PC-9 (cell line): ENCODE measurements at regions of chr13 and their contacts with region 1.

Region 1: GRCh38 chr13:27362064-27362883 is 62.1 kb upstream of the GTF3A start:
- DNase-seq: peak; percentile 59 to 78
- H3K4me3 ChIP-seq: peak overlapping the region; percentile 33; the same call in 1 of the 2 replicates
- H3K27ac ChIP-seq: no peak overlapping the region
- H3K4me1 ChIP-seq: no peaks in the 10 kb centered on the region; the same call in 1 of the 2 replicates
- H3K27me3 ChIP-seq: peaks cover 4% of the 10 kb centered on the region; the same call in 1 of the 2 replicates
- CTCF ChIP-seq: peak; percentile 90

Region 2: GRCh38 chr13:26985285-26985878 is 376.9 kb before region 1 on chr13:
- CTCF ChIA-PET with region 1: interaction called, 10 read pairs
- POLR2A ChIA-PET with region 1: no interaction called
- intact Hi-C with region 1: loop called (anchors 1 kb)
- DNase-seq: peak; percentile 51 to 74
- H3K4me3 ChIP-seq: no peak overlapping the region
- H3K27ac ChIP-seq: no peak overlapping the region
- H3K4me1 ChIP-seq: peaks cover 32% of the 10 kb centered on the region
- H3K27me3 ChIP-seq: no peaks in the 10 kb centered on the region
- CTCF ChIP-seq: peak; percentile 89

Region 3: GRCh38 chr13:27283906-27284493 is 78.3 kb before region 1 on chr13:
- CTCF ChIA-PET with region 1: no interaction called
- POLR2A ChIA-PET with region 1: no interaction called
- intact Hi-C with region 1: loop called (anchors 1 kb)
- DNase-seq: peak; percentile 46 to 49
- H3K4me3 ChIP-seq: no peak overlapping the region
- H3K27ac ChIP-seq: no peak overlapping the region
- H3K4me1 ChIP-seq: peaks cover 20% of the 10 kb centered on the region
- H3K27me3 ChIP-seq: no peaks in the 10 kb centered on the region
- CTCF ChIP-seq: peak; percentile 65

Region 4: DNA sequence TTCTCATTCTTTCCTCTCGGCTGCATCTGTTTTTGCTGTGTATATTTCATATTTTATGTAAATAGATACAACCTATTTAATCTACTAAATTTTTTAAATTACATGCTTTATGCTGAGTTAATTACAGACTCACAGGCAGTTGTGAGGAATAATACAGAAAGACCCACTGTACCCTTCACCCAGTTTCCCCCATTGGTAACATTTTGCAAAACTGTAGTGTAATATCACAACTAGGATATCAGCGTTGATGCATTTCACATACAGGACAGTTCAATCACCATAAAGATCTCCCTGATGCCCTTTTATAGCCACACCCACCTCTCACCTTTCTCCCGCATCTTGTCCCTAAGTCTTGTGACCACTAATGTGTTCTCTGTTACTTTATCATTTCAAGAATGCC is 473.5 kb after region 1 on chr13:
- CTCF ChIA-PET with region 1: no interaction called
- POLR2A ChIA-PET with region 1: no interaction called
- intact Hi-C with region 1: no loop called
- DNase-seq: no peak
- H3K4me3 ChIP-seq: no peak overlapping the region
- H3K27ac ChIP-seq: no peak overlapping the region
- H3K4me1 ChIP-seq: peaks cover 21% of the 10 kb centered on the region
- H3K27me3 ChIP-seq: peaks cover 12% of the 10 kb centered on the region; the same call in 1 of the 2 replicates
- CTCF ChIP-seq: no peak

Region 5: GRCh38 chr13:27980280-27980998 is 618.2 kb after region 1 on chr13:
- CTCF ChIA-PET with region 1: interaction called, 12 read pairs
- POLR2A ChIA-PET with region 1: no interaction called
- intact Hi-C with region 1: loop called (anchors 1 kb)
- DNase-seq: no peak
- H3K4me3 ChIP-seq: no peak overlapping the region
- H3K27ac ChIP-seq: no peak overlapping the region
- H3K4me1 ChIP-seq: no peaks in the 10 kb centered on the region
- H3K27me3 ChIP-seq: peaks cover 40% of the 10 kb centered on the region
- CTCF ChIP-seq: no peak